PC-9 (cell line): ENCODE measurements at regions of chr6 and their contacts with region 1.

Region 1: GRCh38 chr6:16747232-16748024 is 13.8 kb downstream of the ATXN1 start:
- DNase-seq: no peak
- H3K4me3 ChIP-seq: no peak overlapping the region
- H3K27ac ChIP-seq: no peak overlapping the region
- H3K4me1 ChIP-seq: peaks cover 23% of the 10 kb centered on the region
- H3K27me3 ChIP-seq: no peaks in the 10 kb centered on the region
- CTCF ChIP-seq: no peak

Region 2: GRCh38 chr6:16471222-16471909 is 276.1 kb before region 1 on chr6:
- CTCF ChIA-PET with region 1: no interaction called
- POLR2A ChIA-PET with region 1: interaction called, 15 read pairs
- intact Hi-C with region 1: no loop called
- DNase-seq: no peak
- H3K4me3 ChIP-seq: no peak overlapping the region
- H3K27ac ChIP-seq: no peak overlapping the region
- H3K4me1 ChIP-seq: peaks cover 16% of the 10 kb centered on the region; the same call in 1 of the 2 replicates
- H3K27me3 ChIP-seq: no peaks in the 10 kb centered on the region
- CTCF ChIP-seq: no peak

Region 3: GRCh38 chr6:16712931-16713484 is 34.4 kb before region 1 on chr6:
- CTCF ChIA-PET with region 1: no interaction called
- POLR2A ChIA-PET with region 1: no interaction called
- intact Hi-C with region 1: no loop called
- DNase-seq: peak; percentile 45 to 95
- H3K4me3 ChIP-seq: peak overlapping the region; percentile 34; the same call in 1 of the 2 replicates
- H3K27ac ChIP-seq: peak overlapping the region; percentile 95
- H3K4me1 ChIP-seq: peaks cover 33% of the 10 kb centered on the region
- H3K27me3 ChIP-seq: no peaks in the 10 kb centered on the region
- CTCF ChIP-seq: peak; percentile 68

Region 4: DNA sequence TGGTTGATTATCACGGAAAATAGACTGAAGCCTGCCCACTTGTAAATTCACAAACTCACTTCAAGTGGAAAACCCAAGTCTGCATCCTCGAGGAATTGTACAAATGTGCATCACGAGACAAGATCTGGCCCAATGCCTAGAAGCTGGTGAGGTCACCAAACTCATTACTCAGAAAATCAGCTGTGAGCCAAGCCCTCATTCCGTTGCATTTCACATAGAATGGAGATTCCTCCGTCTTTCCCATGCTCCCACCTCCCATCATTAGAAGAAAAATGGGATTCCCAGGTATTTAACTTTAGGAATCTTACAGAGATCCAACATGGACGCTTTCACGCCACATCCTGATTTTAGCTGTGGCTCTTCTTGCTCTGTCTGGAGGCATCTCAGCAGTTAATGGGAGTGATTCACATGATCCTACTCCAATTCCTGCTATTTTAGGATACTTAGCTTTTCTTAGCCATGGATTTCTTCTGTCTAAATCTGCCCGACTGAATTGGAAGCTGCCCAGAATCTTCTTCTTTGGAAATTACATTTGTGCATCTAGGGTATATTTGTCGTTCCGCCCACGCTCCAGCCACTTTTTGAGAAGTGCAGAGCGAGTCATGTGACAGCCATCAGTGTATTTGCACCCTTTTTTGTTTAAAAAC is 285.7 kb after region 1 on chr6:
- CTCF ChIA-PET with region 1: no interaction called
- POLR2A ChIA-PET with region 1: no interaction called
- intact Hi-C with region 1: no loop called
- DNase-seq: peak; percentile 46 to 54
- H3K4me3 ChIP-seq: 0 out of 2 replicates have a peak overlapping the region, but pooled peaks have one; percentile 7
- H3K27ac ChIP-seq: peak overlapping the region; percentile 23
- H3K4me1 ChIP-seq: peaks cover 13% of the 10 kb centered on the region; the same call in 1 of the 2 replicates
- H3K27me3 ChIP-seq: no peaks in the 10 kb centered on the region
- CTCF ChIP-seq: no peak